Pancreas (tissue), 10 donors: ENCODE measurements at regions of chr5 and their contacts with region 1.

Region 1: DNA sequence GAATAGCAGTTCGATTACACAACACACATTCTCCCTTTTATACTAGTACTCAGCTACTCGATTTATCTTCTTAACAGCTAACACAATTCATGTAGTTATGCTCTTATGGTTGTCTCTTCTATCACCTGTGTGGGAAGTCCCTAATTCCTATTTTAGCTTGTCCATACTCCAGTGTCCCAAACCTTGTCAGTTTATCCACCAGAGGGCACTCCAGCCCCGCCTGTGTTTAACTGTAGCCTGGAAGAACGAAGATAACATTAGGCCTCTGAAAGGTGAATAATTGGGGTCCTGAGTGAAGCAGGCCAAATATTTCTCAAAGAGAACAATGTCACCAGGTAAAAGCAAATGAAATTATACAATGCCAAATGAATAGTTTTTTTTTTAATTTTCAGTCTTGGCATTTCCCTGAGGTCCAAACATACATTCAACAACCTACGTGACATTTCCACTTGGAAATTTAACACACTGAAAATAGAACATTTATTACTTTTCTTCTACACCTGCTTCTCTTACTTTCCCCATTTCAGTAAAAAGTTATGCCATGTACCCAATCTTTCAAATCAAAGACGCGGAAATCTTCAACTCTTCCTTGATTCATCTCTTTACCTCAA is 560.7 kb downstream of the HTR1A start:
- DNase-seq: peak; percentile 27 to 76 (median 44)
- ATAC-seq: peak; percentile 61 to 94 (median 90)
- H3K4me3 ChIP-seq: no peak overlapping the region
- H3K27ac ChIP-seq: no peak overlapping the region
- H3K4me1 ChIP-seq: no peaks in the 10 kb centered on the region
- H3K27me3 ChIP-seq: no peaks in the 10 kb centered on the region
- CTCF ChIP-seq: peak; percentile 35 to 64 (median 53)

Region 2: GRCh38 chr5:63351164-63351563 is 50.4 kb before region 1 on chr5:
- intact Hi-C with region 1: no loop called
- DNase-seq: no peak
- ATAC-seq: no peak
- H3K4me3 ChIP-seq: no peak overlapping the region
- H3K27ac ChIP-seq: no peak overlapping the region
- H3K4me1 ChIP-seq: no peaks in the 10 kb centered on the region
- H3K27me3 ChIP-seq: no peaks in the 10 kb centered on the region
- CTCF ChIP-seq: no peak

Region 3: DNA sequence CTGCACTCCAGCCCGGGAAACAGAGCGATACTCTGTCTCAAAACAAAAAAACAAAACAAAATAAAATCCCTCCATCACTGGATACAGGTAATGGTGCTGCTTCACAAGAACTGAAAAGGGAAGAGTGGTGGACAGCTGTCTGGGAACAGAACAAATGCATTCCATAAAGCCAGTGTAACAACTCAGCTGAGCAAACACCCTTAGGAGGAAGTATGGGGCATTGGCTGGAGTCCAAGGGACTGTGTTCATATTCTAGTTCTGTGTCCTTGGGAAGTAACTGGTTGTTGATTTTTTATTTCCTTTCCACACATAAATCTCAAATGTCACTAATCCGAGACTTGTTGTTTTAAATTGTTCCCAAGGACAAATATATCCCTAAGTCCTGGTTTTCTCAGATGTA is 522.4 kb after region 1 on chr5:
- intact Hi-C with region 1: no loop called
- DNase-seq: peak in 4 of 6 donors; percentile 70 to 89 (median 82)
- ATAC-seq: peak; percentile 88 to 96 (median 92)
- H3K4me3 ChIP-seq: no peak overlapping the region
- H3K27ac ChIP-seq: peak overlapping the region in 2 of 4 donors; percentile 44 to 59
- H3K4me1 ChIP-seq: peaks cover 0 to 6% (median 0%) of the 10 kb centered on the region in 3 donors
- H3K27me3 ChIP-seq: no peaks in the 10 kb centered on the region
- CTCF ChIP-seq: no peak

Region 4: DNA sequence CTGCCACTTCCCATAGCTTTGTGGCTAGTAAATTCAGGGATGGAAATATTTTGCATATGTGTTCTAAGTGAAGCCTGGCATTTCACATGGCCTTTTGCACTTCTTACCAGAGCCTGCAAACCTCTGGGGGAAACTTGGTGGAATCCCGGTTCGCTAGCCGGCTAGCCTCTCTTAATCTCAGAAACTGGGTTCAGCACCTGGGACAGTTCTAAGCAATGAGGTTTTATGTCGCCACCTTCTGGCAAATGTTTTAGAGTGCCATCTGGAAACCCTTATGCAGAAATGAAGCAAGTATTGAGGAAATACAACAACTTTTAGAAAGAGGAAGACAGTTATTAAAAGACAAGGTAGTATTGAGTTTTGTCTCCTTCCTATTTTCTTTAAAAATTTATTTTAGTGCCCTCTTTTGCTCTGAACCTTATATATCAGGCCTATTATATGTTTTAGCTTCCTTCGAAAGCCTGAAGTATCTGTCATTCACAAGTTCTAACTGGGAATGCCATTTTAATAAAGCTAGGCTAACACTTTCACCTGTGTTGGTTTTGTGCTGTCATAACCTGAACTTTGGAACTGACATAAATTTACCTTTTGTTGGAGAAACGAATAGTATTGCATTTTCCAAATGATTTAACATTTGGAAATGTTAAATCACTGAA is 561.7 kb after region 1 on chr5:
- intact Hi-C with region 1: loop called in 2 of 3 experiments (anchors 5 kb)
- DNase-seq: peak in 3 of 6 donors; percentile 35 to 63 (median 49)
- ATAC-seq: peak; percentile 65 to 84 (median 80)
- H3K4me3 ChIP-seq: no peak overlapping the region
- H3K27ac ChIP-seq: no peak overlapping the region
- H3K4me1 ChIP-seq: no peaks in the 10 kb centered on the region
- H3K27me3 ChIP-seq: peaks cover 0 to 25% (median 3%) of the 10 kb centered on the region in 4 donors
- CTCF ChIP-seq: peak in 3 of 4 donors; percentile 18 to 27 (median 23)

Region 5: GRCh38 chr5:63981864-63982263 is 580.3 kb after region 1 on chr5:
- intact Hi-C with region 1: loop called in 1 of 3 experiments (anchors 10 kb)
- DNase-seq: no peak
- ATAC-seq: no peak
- H3K4me3 ChIP-seq: no peak overlapping the region
- H3K27ac ChIP-seq: no peak overlapping the region
- H3K4me1 ChIP-seq: no peaks in the 10 kb centered on the region
- H3K27me3 ChIP-seq: no peaks in the 10 kb centered on the region
- CTCF ChIP-seq: no peak